ENCODE measurements at regions of chr11 and their contacts with region 1.

Region 1: GRCh38 chr11:66311965-66312548 is 4.8 kb downstream of the CD248 start:
- DNase-seq: peak; percentile 92 to 93
- ATAC-seq: peak; percentile 74 to 90 (median 86)
- H3K4me3 ChIP-seq: peak overlapping the region; percentile 24 to 76 (median 60)
- H3K27ac ChIP-seq: peak overlapping the region; percentile 31 to 94 (median 85)
- H3K4me1 ChIP-seq: peaks cover 4 to 38% (median 21%) of the 10 kb centered on the region in 9 donors
- H3K27me3 ChIP-seq: peaks cover 0 to 6% (median 0%) of the 10 kb centered on the region in 7 donors
- CTCF ChIP-seq: peak; percentile 2 to 98 (median 89)

Region 2: GRCh38 chr11:66288671-66289547 is 23.1 kb before region 1 on chr11 and contains the start of gene YIF1A:
- intact Hi-C with region 1: loop called in 1 of 10 experiments (anchors 1 kb)
- DNase-seq: peak; percentile 98 to 99
- ATAC-seq: peak; percentile 92 to 98 (median 97)
- H3K4me3 ChIP-seq: peak within 1 kb of the TSS; percentile 63 to 98 (median 82)
- H3K27ac ChIP-seq: peak within 1 kb of the TSS; percentile 82 to 98 (median 94)
- H3K4me1 ChIP-seq: peaks cover 5 to 55% (median 39%) of the 10 kb centered on the region in 9 donors
- H3K27me3 ChIP-seq: peaks cover 13 to 34% (median 22%) of the 10 kb centered on the region in 7 donors
- CTCF ChIP-seq: peak in 3 of 9 donors; percentile 28 to 45 (median 31)
- total RNA-seq, gene YIF1A: 38.3 to 75.0 (median 51.9) TPM

Region 3: DNA sequence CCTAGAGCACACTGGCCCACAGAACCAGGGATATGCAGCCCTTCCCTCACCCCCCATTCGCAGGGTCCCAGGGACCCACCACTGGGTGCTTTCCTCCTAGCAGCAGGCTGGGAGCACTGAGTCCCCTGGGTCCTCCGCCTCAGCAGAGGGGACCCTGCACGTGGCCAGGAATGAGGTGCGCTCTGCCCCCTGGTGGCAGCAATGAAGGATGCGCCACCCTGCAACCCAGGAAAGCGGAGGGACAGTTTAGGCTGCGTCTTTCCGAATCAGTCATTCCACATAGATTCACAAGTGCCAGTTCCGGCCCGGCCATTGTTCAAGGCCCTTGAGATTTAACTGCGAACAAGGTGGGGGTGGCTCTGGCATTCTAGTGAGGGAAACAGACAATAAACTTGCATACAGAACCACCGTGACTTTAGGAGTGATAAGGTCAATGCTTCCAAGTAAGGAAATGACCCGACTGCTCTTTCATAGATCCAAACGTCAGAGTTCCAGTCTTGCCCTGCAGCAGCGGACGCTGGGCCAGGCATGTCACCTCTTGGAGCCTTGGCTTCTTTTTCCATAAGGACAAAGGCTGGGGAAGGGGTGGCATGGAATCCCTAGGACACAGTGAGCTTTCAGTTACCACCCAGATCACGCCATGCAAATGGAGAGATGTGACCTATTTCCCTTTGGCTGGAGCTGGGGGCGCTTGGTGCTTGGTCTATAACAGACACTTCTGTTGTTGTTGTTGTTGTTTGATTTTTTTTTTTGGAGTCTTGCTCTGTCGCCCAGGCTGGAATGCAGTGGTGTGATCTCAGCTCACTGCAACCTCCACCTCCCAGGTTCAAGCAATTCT is 16.5 kb after region 1 on chr11:
- intact Hi-C with region 1: loop called in 8 of 10 experiments (anchors 1 to 2 kb)
- DNase-seq: peak; percentile 78 to 83
- ATAC-seq: peak; percentile 66 to 87 (median 79)
- H3K4me3 ChIP-seq: peak overlapping the region in 4 of 10 donors; percentile 14 to 34 (median 19)
- H3K27ac ChIP-seq: peak overlapping the region in 6 of 10 donors; percentile 74 to 89 (median 77)
- H3K4me1 ChIP-seq: peaks cover 21 to 40% (median 30%) of the 10 kb centered on the region in 9 donors
- H3K27me3 ChIP-seq: no peaks in the 10 kb centered on the region
- CTCF ChIP-seq: peak; percentile 91 to 98 (median 96)

Region 4: GRCh38 chr11:66333896-66334604 is 22.0 kb after region 1 on chr11:
- intact Hi-C with region 1: loop called in 2 of 10 experiments (anchors 2 kb)
- DNase-seq: no peak
- ATAC-seq: no peak
- H3K4me3 ChIP-seq: no peak overlapping the region
- H3K27ac ChIP-seq: no peak overlapping the region
- H3K4me1 ChIP-seq: peaks cover 14 to 31% (median 24%) of the 10 kb centered on the region in 9 donors
- H3K27me3 ChIP-seq: no peaks in the 10 kb centered on the region
- CTCF ChIP-seq: no peak

Region 5: DNA sequence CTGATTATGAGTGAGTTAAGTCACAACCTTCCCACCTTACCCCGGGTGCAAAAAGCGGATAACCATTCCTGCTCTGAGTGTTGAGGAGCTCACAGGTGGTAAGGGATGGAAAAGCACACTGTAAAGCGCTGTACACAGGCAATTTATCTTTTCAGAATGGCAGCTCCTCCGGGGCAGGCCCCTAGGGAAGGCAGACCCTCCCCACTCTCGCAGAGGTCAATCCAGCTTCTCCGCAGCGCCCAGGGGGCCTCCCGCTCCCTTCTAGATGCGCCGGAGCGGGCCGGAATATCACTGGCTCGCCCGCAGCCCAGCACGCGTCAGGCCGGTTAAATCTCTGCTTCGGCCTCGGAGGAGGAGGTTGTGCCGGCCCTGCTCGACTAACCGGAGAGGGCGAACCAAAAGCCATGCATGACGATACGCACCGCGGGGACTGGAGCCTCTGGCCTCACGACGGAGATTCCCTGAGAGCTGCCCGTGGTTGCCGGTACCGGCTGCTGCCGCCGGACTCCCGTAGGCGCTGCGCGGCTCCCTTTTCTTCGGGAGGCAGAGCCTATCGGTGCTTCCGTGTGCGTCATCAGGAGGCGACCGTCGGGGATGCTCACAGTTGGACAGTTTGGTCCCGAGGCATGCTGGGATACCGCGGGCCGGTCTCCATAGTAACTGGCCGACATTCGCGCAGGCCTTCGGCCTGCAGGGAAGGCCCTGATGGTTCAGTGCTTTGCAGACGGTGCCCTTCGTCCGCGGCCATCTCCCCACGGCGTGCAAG is 32.7 kb after region 1 on chr11 and contains the start of gene BRMS1:
- intact Hi-C with region 1: loop called in 3 of 10 experiments (anchors 5 kb)
- DNase-seq: peak; percentile 98 to 99
- ATAC-seq: peak; percentile 84 to 96 (median 92)
- H3K4me3 ChIP-seq: peak within 1 kb of the TSS; percentile 81 to 100 (median 94)
- H3K27ac ChIP-seq: peak within 1 kb of the TSS in 9 of 10 donors; percentile 61 to 88 (median 84)
- H3K4me1 ChIP-seq: peaks cover 16 to 48% (median 39%) of the 10 kb centered on the region in 9 donors
- H3K27me3 ChIP-seq: peaks cover 0 to 5% (median 0%) of the 10 kb centered on the region in 7 donors
- CTCF ChIP-seq: peak in 4 of 9 donors; percentile 14 to 33 (median 20)
- total RNA-seq, gene BRMS1: 10.6 to 17.6 (median 12.9) TPM

Region 6: GRCh38 chr11:66373261-66373660 is 61.2 kb after region 1 on chr11:
- intact Hi-C with region 1: loop called in 1 of 10 experiments (anchors 1 kb)
- DNase-seq: peak; percentile 24 to 61
- ATAC-seq: peak; percentile 23 to 81 (median 66)
- H3K4me3 ChIP-seq: no peak overlapping the region
- H3K27ac ChIP-seq: peak overlapping the region in 9 of 10 donors; percentile 79 to 90 (median 86)
- H3K4me1 ChIP-seq: peaks cover 2 to 45% (median 20%) of the 10 kb centered on the region in 9 donors
- H3K27me3 ChIP-seq: peaks cover 0 to 39% (median 15%) of the 10 kb centered on the region in 7 donors
- CTCF ChIP-seq: no peak

Region 7: DNA sequence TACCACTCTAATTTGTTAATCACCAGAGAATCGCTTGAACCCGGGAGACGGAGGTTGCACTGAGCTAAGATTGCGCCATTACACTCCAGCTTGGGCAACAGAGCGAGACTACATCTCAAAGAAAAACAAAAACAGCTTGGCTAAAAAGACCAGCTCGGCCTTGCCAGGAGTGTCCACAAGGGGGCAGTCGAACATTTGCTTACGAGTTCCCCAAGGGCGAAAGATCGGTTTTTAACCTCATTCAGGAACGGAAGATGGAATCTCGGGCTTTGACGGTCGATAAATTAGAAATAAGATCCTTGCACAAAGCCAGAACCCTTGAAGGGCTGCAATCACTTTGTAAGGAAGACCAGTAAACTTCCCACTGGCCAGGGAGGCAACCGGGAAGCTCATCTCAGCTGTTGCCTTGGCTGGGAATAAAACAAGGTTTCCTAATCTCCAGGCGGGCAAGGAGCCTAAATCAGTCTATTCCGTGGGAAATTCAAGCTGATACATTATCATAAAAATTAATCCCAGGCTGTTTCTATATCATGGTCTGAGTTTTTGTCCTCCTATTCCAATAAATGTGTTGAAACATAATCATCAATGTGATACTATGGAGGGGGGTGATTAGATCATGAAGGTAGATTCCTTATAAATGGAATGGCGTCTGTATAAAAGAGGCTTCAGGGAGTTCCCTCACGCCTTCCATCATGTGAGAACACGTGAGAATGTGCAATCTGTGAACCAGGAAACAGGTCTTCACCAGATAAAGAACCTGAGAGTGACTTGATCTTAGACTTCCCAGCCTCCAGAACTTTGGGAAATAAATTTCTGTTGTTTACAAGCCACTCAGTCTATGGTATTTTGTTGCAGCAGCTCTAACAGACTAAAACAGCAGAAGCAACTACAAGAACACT is 74.4 kb after region 1 on chr11:
- intact Hi-C with region 1: loop called in 9 of 10 experiments (anchors 2 to 10 kb)
- DNase-seq: peak; percentile 79 to 82
- ATAC-seq: peak in 7 of 8 donors; percentile 49 to 78 (median 65)
- H3K4me3 ChIP-seq: peak overlapping the region in 7 of 10 donors; percentile 6 to 47 (median 17)
- H3K27ac ChIP-seq: peak overlapping the region in 1 of 10 donors; percentile 1
- H3K4me1 ChIP-seq: peaks cover 0 to 14% (median 8%) of the 10 kb centered on the region in 9 donors
- H3K27me3 ChIP-seq: peaks cover 0 to 15% (median 0%) of the 10 kb centered on the region in 7 donors
- CTCF ChIP-seq: peak; percentile 78 to 97 (median 94)

Region 8: DNA sequence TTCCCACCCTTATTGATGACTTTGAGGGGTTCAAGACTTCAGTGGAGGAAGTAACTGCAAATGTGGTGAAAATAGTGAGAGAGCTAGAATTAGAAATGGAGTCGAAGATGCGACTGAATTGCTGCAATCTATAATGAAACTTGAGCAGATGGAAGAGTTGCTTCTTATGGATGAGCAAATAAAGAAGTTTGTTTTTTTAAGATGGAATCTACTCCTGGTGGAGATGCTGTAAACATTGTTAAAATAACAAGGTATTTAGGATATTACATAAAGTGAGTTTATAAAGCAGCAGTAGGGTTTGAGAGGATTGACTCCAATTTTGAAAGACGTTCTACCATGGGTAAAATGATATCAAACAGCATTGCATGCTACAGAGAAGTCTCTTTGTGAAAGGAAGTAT is 890.0 kb after region 1 on chr11:
- intact Hi-C with region 1: no loop called
- DNase-seq: no peak
- ATAC-seq: no peak
- H3K4me3 ChIP-seq: no peak overlapping the region
- H3K27ac ChIP-seq: no peak overlapping the region
- H3K4me1 ChIP-seq: no peaks in the 10 kb centered on the region
- H3K27me3 ChIP-seq: no peaks in the 10 kb centered on the region
- CTCF ChIP-seq: no peak